Right ventricle myocardium inferior (tissue), 1 donor: ENCODE measurements at regions of chr5 and their contacts with region 1.

Region 1: GRCh38 chr5:32232441-32233219 is 58.5 kb upstream of the GOLPH3 start:
- DNase-seq: peak; percentile 82
- ATAC-seq: peak; percentile 86

Region 2: DNA sequence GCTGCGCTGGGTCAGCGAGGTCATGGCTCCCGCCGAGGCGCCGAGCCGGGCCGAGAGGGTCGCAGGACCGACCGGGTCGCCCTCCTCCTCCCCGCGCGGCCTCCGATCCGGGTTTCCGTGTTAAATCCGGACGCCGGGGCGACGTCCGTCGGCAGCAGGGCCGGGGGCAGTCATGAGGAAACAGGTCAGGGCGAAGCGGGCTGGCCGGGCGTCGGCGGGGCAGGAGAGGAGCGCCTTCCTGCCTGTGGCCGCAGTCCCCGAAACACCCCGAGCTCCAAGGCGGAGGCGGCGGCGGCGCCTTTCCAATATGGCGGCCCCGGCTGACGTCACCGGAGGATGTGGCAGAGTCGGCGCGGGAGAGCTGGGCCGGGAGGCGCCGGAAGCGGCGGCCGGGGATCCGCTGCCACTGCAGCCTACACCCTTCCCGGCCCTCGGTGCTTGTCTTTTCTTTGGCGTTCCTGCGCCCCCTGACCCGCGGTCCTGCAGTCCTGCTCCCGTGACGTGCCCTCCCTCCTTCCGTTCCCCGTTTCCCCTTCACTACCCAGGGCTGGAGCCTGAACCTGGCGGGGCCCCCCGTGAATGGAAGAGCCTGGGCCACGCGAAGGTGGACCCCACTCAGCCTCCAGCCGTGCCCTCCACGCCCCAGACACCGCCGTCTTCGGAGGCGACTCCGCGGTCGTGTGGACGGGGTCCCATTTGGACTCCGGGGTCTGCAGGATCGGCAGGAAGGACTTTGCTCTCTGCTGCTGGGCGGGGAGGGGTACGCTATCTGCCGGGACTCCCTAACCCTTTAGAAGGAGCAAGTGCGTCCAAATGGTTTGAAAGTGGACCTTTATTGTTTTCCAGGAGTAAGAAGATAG is 58.4 kb before region 1 on chr5 and contains the start of gene GOLPH3:
- intact Hi-C with region 1: loop called (anchors 1 kb)
- DNase-seq: peak; percentile 99
- ATAC-seq: peak; percentile 95
- total RNA-seq, gene GOLPH3: 42.3 TPM

Region 3: DNA sequence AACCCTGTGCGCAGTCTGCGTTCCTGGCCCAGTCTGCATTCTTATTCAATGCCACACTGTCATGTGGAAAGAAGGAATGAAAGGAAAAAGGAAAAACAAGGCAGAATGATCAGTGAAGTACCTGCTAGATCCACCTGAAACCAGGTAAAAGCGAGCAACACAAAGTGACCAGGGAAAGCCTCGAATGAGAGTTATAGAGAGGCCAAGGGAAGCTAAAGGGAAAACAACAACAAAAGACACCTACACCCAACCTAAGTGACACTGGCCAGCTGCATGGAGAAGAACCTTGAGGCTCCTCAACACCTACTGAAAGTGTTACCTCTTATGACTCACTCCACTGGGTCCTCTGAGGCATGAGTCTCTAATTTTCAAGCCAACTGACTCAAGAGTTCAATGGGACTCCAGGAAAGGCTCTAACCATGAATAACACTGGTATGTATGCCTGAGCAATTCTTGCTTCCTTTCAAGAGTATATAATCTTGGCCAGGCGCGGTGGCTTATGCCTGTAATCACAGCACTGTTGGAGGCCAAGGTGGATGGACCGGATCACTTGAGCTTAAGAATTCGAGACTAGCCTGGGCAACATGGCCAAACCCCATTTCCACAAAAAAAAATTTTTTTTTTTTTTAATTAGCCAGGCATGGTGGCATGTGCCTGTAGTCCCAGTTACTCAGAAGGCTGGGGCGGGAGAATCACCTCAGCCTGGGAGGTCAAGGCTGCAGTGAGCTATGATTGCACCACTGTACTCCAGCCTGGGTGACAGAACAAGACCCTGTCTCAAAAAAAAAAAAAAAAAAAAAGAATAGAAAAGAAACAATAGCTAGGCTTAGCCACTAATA is 51.1 kb after region 1 on chr5:
- intact Hi-C with region 1: no loop called
- DNase-seq: no peak
- ATAC-seq: no peak

Region 4: DNA sequence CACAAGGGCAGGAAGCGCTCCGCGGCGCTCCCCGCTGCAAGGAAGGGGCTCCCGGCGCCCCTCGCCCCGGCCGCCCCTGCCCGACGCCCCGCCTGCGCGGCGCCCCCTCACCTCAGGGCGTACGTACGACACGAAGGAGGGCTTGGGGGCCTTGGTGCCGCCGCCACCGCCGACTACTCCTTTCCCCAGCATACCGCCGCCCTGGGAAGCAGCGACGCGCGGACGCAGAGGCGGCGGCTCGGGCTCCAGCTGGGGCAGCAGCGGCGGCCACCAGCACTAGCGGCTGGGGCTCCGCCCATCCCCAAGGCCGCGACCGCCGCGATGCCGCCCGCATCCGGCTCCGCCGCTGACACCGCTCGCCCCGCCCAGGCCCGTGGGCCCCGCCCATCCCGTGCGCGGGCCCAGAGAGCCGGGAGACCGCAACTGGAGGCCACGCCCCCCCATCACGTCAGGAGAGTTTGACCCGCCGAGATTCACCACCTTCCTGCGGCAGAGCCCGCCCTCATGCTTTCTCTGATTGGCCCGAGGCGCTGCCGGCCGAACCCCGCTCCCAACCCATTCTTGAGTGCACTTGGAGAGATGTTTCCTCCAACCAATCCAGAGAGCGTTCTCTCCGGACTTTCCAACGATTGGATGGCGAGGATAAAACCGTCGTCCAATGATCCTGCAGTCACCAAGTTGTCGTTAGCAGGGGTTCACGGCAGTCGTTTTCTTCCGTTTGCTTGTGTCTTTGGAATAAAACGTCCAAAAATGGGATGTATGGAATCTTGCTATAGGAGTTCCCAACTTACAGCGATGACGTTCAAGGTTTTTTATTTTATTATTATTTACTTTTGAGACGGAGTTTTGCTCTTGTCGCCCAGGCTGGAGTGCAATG is 80.3 kb after region 1 on chr5 and contains the start of gene MTMR12:
- intact Hi-C with region 1: loop called (anchors 5 kb)
- DNase-seq: peak; percentile 100
- ATAC-seq: peak; percentile 99
- total RNA-seq, gene MTMR12: 18.7 TPM

Region 5: DNA sequence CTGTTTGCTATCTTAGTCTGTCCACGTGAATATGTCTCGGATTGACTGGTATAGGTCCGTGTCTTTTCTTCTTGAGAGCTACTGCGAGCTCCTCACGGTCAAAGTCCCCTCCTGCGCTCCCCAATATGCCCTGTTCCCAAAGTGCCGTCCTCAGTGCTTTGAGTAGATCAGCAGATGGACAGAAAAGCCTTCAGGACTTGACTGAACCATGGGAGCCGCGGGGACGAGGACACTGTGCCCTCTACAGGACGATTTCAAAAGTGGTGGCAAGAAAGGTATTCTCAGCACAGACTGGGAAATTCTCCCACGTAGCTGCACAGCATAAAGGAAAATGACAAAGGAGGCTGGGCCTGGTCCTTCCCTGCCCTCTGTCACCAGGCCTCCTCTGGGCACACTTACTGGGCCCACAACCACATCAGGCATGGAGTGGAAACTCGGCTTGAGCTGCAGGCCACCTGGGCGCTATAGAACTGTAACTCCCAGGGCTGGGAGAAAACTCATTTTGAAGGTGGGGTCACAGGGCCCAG is 96.7 kb after region 1 on chr5:
- intact Hi-C with region 1: loop called (anchors 1 kb)
- DNase-seq: no peak
- ATAC-seq: peak; percentile 91

Region 6: DNA sequence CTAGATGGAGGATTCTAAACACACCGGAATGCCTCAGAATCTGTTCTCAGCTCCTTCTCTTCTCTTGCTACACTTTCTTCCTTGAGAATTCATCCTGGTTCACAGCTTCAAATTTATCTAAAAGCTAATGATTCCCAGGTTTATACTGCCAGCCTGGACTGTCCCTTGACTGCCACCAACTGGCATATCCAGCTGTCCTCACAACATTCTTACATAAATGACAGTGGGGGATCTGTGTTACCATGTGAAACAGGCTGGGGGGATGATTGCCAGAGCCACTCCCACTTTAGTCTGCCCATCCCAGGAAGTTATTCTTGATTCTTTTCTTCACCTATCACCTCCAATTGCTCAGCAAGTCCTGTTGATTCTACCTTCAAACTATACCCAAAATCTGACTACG is 239.2 kb after region 1 on chr5:
- intact Hi-C with region 1: loop called (anchors 5 kb)
- DNase-seq: no peak
- ATAC-seq: no peak